ENCODE measurements at regions of chr17 and their contacts with region 1.

Region 1: DNA sequence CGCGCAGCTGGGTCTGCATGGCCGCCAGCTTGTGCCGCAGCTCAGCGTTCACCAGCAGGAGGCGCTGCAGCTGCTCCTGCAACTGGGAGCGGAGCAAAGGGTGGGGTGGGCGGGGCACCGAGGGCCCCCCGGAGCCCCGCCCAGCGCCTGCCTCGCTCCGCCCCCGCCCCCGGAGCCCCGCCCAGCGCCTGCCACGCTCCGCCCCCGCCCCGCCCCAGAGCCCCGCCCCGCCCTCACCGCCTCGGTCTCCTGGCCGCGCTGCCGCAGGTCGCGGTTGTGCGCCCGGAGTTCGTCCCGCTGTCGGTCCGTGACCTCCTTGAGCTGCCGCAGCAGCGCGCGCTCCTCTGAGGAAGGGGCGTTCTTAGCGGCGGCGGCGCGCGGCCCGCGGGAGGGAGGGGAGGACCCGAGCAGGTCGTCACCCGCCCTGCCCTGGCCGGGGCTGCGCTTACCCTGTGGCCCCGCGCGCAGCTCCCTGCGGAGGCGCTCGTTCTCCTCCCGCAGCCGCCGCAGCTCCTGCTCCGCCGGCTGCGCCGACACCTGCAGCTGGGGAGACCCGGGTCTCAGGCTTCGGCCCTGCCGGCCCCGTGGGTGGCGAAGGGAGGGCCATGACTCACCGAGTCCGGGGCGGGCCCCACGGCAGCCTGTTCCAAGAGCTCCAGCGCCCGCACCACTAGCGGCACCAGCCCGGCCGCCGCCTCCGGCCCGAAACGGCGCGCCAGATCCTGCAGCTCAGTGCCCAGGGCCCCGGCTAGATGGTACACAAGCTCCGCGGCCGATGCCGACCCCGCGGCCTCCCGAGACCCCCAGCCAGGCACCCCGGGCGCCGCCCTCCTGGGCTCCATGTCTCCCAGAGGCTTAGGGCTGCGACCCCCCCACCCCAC is 463 bp downstream of the RILP start:
- DNase-seq: peak; percentile 86
- H3K4me3 ChIP-seq: peak overlapping the region; percentile 34 to 77 (median 63)
- H3K27ac ChIP-seq: peak overlapping the region; percentile 34
- H3K4me1 ChIP-seq: peaks cover 41% of the 10 kb centered on the region
- H3K27me3 ChIP-seq: no peaks in the 10 kb centered on the region
- CTCF ChIP-seq: peak; percentile 72 to 85

Region 2: DNA sequence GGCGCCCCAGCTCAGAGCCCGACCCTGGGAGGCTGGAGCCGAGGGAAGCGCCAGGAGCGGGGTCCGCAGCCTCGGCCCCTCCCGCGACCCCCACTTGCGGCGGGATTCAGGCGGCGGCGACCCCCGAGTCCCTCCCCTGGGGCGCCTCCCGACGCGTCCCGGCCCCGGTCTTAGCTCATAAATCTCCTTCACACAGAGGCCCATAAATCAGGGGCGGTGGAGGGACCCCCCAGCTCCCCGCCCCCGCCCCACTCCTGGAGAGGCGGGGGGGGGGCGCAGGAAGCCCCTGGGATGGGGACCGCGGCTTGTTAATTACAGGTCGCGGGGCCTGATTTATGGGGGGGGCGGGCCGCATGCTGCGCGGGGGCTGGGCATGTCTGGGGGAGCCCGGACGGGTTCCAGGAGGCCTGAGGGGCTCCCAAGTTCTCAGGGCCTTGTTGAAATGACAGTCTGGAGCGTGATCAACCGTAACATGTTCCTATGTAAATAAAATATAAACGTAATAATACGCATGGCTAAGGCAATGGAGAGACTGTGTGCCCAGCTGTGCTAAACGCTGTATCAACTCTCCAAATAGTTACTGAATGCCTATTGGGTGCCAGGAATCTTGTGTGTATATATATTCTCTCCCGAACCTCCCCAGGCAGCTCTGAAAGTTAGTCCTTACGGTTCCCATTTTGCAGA is 389.0 kb before region 1 on chr17:
- CTCF ChIA-PET with region 1: no interaction called
- dilution Hi-C with region 1: no loop called
- in situ Hi-C with region 1: loop called in 1 of 2 experiments (anchors 25 kb)
- intact Hi-C with region 1: loop called (anchors 1 kb)
- DNase-seq: no peak
- H3K4me3 ChIP-seq: peak overlapping the region in 2 of 3 experiments; percentile 24 to 65
- H3K27ac ChIP-seq: no peak overlapping the region
- H3K4me1 ChIP-seq: peaks cover 4% of the 10 kb centered on the region
- H3K27me3 ChIP-seq: peaks cover 3% of the 10 kb centered on the region
- CTCF ChIP-seq: no peak

Measured in mammary epithelial cell (primary cell).